H1 (cell line): ENCODE measurements at regions of chr14 and their contacts with region 1.

Region 1: DNA sequence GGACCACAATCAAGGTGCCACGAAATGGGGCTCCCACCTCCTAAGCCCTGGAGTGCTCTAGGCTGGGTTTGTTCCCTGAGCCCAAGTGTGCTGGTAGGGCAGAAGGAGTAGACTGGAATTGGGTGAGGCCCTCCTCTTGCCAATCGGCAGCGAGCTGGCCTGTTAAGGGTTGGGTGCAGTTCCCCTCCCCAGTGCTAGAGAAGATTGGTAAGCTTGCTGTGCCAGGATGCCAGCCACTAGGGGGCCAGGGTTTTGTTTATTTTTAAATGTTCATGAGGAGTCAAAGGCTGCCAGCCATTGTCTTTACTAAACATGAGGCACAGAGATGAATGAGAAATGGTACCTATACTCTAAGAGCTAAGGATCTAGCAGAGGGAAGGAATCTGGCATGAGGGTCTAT is 79.7 kb downstream of the SPTB start:
- DNase-seq: no peak
- H3K4me3 ChIP-seq: no peak overlapping the region
- H3K27ac ChIP-seq: no peak overlapping the region
- H3K4me1 ChIP-seq: no peaks in the 10 kb centered on the region
- H3K27me3 ChIP-seq: no peaks in the 10 kb centered on the region
- CTCF ChIP-seq: peak; percentile 47 to 53 (median 51)
- EP300 ChIP-seq: no peak
- POLR2A ChIP-seq: no peak
- RAD21 ChIP-seq: peak; percentile 10 to 37; a peak in 1 of 4 replicates

Region 2: DNA sequence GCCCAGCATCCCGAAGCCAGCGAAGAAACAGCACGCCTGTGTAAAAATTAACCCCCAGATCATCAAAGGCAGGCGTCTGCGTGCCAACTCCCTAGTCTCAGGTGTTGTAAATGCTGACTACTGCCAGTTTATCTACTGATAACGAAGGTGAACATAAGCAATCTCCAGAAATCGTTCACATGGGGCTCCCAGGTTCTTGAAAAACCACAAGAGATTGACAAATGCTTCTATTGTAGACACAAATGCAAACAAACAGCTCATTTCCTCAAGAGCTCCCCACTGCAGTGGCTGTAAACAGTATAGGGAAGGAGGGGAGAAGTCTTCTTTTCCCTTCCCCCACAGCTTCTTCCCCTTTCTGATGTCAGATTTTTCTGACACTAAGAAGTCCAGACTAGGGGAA is 101.1 kb before region 1 on chr14:
- CTCF ChIA-PET with region 1: interaction called, 20 read pairs
- POLR2A ChIA-PET with region 1: no interaction called
- DNase-seq: no peak
- H3K4me3 ChIP-seq: no peak overlapping the region
- H3K27ac ChIP-seq: no peak overlapping the region
- H3K4me1 ChIP-seq: peaks cover 5 to 34% (median 24%) of the 10 kb centered on the region in 4 experiments; a peak in 6 of 7 replicates
- H3K27me3 ChIP-seq: no peaks in the 10 kb centered on the region
- CTCF ChIP-seq: no peak
- EP300 ChIP-seq: no peak
- POLR2A ChIP-seq: no peak
- RAD21 ChIP-seq: no peak

Region 3: DNA sequence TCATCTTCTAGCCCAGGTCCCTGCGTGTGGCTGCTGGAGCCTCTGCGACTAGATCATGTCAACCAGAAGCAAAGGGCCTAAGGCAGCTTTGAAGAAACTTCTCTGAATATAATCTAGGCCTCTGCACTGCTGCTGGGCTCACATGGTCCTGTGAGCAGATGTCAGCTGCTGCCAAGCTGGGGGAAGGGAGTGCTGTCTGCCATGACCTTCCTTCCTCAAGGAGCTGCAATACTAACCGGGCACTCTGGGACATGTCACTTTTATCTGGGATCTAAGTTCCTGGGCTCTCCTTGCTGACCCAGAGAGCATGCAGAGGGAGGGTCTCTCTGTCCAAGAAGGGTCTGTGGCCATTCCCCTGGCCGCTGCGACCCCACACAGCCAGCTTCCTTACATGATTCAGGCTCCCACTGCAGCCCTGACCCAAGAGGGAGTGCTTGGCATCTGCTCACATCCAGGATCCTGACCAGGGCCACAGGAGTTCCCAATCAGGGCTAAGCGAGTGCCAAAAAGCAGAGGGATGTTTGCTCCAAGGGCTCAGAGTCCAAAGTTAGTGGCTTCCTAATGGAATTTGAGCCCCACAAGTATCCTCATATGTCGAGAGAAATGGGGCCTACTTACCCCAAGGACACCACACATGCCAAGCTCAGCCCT is 21.8 kb before region 1 on chr14:
- CTCF ChIA-PET with region 1: interaction called, 96 read pairs
- POLR2A ChIA-PET with region 1: interaction called, 6 read pairs
- DNase-seq: no peak
- H3K4me3 ChIP-seq: no peak overlapping the region
- H3K27ac ChIP-seq: no peak overlapping the region
- H3K4me1 ChIP-seq: no peaks in the 10 kb centered on the region
- H3K27me3 ChIP-seq: no peaks in the 10 kb centered on the region
- CTCF ChIP-seq: no peak
- EP300 ChIP-seq: no peak
- POLR2A ChIP-seq: no peak
- RAD21 ChIP-seq: no peak

Region 4: GRCh38 chr14:64841121-64841651 is 41.2 kb after region 1 on chr14:
- CTCF ChIA-PET with region 1: interaction called, 23 read pairs
- POLR2A ChIA-PET with region 1: no interaction called
- DNase-seq: peak in 1 of 2 experiments; percentile 21
- H3K4me3 ChIP-seq: no peak overlapping the region
- H3K27ac ChIP-seq: no peak overlapping the region
- H3K4me1 ChIP-seq: peaks cover 3 to 15% (median 6%) of the 10 kb centered on the region in 4 experiments; a peak in 3 of 7 replicates
- H3K27me3 ChIP-seq: no peaks in the 10 kb centered on the region
- CTCF ChIP-seq: peak; percentile 43 to 67 (median 54)
- EP300 ChIP-seq: no peak
- POLR2A ChIP-seq: no peak
- RAD21 ChIP-seq: peak; percentile 34 to 51

Region 5: GRCh38 chr14:64880221-64881121 is 80.5 kb after region 1 on chr14:
- CTCF ChIA-PET with region 1: interaction called, 323 read pairs
- POLR2A ChIA-PET with region 1: no interaction called
- DNase-seq: peak in 1 of 2 experiments; percentile 88
- H3K4me3 ChIP-seq: peak overlapping the region; percentile 56 to 82 (median 66)
- H3K27ac ChIP-seq: no peak overlapping the region
- H3K4me1 ChIP-seq: peaks cover 0 to 3% (median 1%) of the 10 kb centered on the region in 4 experiments; a peak in 5 of 7 replicates
- H3K27me3 ChIP-seq: peaks cover 0 to 34% (median 24%) of the 10 kb centered on the region in 4 experiments; a peak in 6 of 7 replicates
- CTCF ChIP-seq: no peak
- EP300 ChIP-seq: no peak
- POLR2A ChIP-seq: peak in 1 of 2 experiments; percentile 28; a peak in 1 of 3 replicates
- RAD21 ChIP-seq: no peak

Region 6: DNA sequence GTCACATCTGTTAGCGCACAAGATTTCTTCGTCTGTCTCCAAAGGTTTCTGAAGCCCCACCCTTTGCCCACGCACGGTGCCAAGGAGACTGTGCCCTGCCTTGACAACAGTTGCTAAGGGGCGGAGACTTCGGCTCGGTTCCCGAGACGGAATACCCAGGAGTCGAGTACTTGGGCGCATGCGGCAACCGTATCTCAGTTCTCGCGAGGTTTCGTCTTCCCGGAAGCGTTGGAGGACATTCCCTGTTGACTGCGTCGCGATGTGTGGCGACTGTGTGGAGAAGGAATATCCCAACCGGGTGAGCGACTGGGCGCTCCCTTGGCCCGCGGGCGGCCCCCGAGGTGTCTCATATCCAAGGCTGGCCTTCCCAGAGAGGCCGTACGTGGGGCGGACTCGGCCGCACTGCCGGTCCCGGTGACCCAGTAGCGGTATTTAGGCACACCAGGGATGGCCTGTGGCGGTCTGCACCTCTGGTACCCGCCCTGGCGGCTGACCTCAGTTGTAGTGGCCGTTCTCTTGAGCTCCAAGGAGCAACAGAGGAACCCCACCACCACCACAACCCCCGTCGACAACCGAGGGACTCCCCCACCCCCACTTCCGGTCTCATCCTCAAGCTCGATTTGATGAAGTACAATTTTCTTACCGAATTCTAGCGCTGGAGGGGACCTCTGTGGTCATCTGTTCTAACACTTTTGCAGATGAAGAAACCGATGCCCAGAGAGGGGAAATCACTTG is 114.4 kb after region 1 on chr14 and contains the start of gene CHURC1:
- CTCF ChIA-PET with region 1: interaction called, 66 read pairs
- POLR2A ChIA-PET with region 1: no interaction called
- DNase-seq: peak; percentile 89 to 96
- H3K4me3 ChIP-seq: peak within 1 kb of the TSS; percentile 75 to 90 (median 89)
- H3K27ac ChIP-seq: peak within 1 kb of the TSS; percentile 86
- H3K4me1 ChIP-seq: peaks cover 0 to 4% (median 3%) of the 10 kb centered on the region in 4 experiments; a peak in 4 of 7 replicates
- H3K27me3 ChIP-seq: no peaks in the 10 kb centered on the region
- CTCF ChIP-seq: peak in 1 of 3 experiments; percentile 9; a peak in 1 of 4 replicates
- EP300 ChIP-seq: no peak
- POLR2A ChIP-seq: peak in 1 of 2 experiments; percentile 97; a peak in 2 of 3 replicates
- RAD21 ChIP-seq: 0 out of 4 replicates have a peak, but pooled peaks of 1 of the 2 experiments have one; percentile 4
- total RNA-seq, gene CHURC1: 50.2 and 55.6 TPM in 2 replicates

Region 7: DNA sequence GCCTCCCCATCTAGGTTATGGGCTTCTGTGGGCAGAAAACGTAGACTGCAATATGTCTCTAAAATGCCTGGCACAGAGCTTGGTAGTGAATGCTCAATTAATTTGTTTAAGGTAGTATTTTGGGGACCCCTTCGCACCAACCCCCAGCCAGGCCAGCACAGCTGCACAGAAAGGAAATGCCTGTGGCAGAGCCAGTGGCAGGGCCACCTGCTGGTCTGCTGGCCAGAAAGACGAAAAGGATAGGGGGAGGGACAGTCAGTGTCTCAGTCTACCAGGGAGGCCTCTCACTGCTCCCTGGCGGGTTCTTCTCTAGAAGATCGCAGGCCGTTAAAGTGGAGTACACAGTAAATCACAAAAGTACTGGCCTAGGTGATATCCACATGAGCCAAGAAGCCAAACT is 168.7 kb after region 1 on chr14:
- CTCF ChIA-PET with region 1: no interaction called
- POLR2A ChIA-PET with region 1: no interaction called
- DNase-seq: no peak
- H3K4me3 ChIP-seq: peak overlapping the region in 1 of 4 experiments; percentile 4; a peak in 1 of 8 replicates
- H3K27ac ChIP-seq: no peak overlapping the region
- H3K4me1 ChIP-seq: peaks cover 0 to 27% (median 16%) of the 10 kb centered on the region in 4 experiments; a peak in 6 of 7 replicates
- H3K27me3 ChIP-seq: peaks cover 0 to 21% (median 8%) of the 10 kb centered on the region in 4 experiments; a peak in 4 of 7 replicates
- CTCF ChIP-seq: no peak
- EP300 ChIP-seq: no peak
- POLR2A ChIP-seq: no peak
- RAD21 ChIP-seq: no peak